ENCODE measurements at regions of chr1 and their contacts with region 1.

Region 1: GRCh38 chr1:222792744-222793143 is 22.1 kb upstream of the DISP1 start:
- DNase-seq: no peak
- H3K4me3 Mint-ChIP-seq: no peak overlapping the region
- H3K27ac Mint-ChIP-seq: no peak overlapping the region
- H3K4me1 Mint-ChIP-seq: peaks cover 5% of the 10 kb centered on the region
- H3K27me3 Mint-ChIP-seq: peaks cover 2% of the 10 kb centered on the region

Region 2: GRCh38 chr1:222754366-222755139 is 38.2 kb before region 1 on chr1:
- CTCF ChIA-PET with region 1: no interaction called
- POLR2A ChIA-PET with region 1: no interaction called
- intact Hi-C with region 1: no loop called
- DNase-seq: no peak
- H3K4me3 Mint-ChIP-seq: no peak overlapping the region
- H3K27ac Mint-ChIP-seq: no peak overlapping the region
- H3K4me1 Mint-ChIP-seq: no peaks in the 10 kb centered on the region
- H3K27me3 Mint-ChIP-seq: peaks cover 7% of the 10 kb centered on the region

Region 3: DNA sequence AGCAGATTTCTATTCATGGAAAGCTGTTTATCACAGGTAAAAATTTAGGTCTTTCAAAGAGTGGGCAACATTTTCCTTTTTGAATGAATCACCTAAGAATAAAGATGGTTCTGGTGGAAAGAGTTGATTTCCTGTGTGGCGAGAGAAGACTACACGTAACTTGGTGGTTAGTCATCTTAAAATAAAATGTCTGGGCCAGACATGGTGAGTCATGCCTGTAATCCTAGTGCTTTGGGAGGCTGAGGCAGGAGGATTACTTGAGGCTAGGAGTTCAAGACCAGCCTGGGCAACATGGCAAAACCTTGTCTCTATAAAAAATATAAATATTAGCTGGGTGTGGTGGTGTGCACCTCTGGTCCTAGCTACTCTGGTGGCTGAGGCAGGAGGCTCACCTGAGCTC is 87.8 kb after region 1 on chr1:
- CTCF ChIA-PET with region 1: no interaction called
- POLR2A ChIA-PET with region 1: no interaction called
- intact Hi-C with region 1: no loop called
- DNase-seq: peak; percentile 38
- H3K4me3 Mint-ChIP-seq: no peak overlapping the region
- H3K27ac Mint-ChIP-seq: no peak overlapping the region
- H3K4me1 Mint-ChIP-seq: peaks cover 11% of the 10 kb centered on the region
- H3K27me3 Mint-ChIP-seq: no peaks in the 10 kb centered on the region

Region 4: DNA sequence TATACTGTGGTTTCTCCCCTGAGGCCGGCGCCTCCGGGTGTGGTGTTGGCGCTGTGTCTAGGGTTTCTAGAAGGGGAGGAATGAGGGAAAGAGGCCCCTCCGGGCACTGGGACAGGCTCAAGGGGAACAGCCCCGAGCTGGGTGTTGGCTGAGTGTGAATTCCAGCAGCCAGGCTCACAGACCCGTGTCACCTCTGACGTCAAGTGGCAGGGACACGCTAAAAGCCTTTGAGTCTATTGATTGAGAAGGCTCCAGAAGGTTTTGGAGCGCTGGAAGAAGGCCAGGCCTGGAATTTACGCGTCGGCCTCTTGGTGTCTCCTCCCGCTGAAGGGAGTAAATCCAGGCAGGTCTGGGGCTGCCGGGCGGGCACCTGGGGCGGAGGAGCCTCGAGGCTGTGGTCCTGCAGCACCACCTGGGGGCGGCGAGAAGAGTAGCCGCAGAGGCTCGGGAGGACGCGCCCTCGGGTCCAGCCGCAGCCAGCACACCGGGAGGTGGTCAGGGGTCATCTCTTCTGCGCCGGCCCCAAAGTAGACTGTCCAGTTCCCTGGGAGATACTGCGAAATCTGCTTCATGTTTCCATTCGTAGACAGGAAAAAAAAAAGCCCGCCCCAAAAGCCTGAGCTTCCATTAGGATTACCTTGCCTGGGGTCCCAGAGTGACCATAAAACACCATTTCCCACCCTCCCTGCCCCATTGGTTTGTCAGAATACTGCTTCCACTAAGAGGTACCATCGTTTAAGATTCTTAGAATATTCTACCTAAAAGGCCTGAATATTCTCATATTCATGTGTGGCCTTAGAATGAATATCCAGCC is 288.6 kb after region 1 on chr1:
- CTCF ChIA-PET with region 1: interaction called, 10 read pairs
- POLR2A ChIA-PET with region 1: no interaction called
- intact Hi-C with region 1: loop called (anchors 1 kb)
- DNase-seq: peak; percentile 83
- H3K4me3 Mint-ChIP-seq: peak overlapping the region; percentile 18
- H3K27ac Mint-ChIP-seq: no peak overlapping the region
- H3K4me1 Mint-ChIP-seq: no peaks in the 10 kb centered on the region
- H3K27me3 Mint-ChIP-seq: peaks cover 6% of the 10 kb centered on the region

Region 5: GRCh38 chr1:223087291-223088255 is 294.8 kb after region 1 on chr1:
- CTCF ChIA-PET with region 1: interaction called, 43 read pairs
- POLR2A ChIA-PET with region 1: no interaction called
- intact Hi-C with region 1: no loop called
- DNase-seq: no peak
- H3K4me3 Mint-ChIP-seq: no peak overlapping the region
- H3K27ac Mint-ChIP-seq: no peak overlapping the region
- H3K4me1 Mint-ChIP-seq: no peaks in the 10 kb centered on the region
- H3K27me3 Mint-ChIP-seq: no peaks in the 10 kb centered on the region